ENCODE measurements at regions of chr13 and their contacts with region 1.

Region 1: GRCh38 chr13:100721885-100722512 is 47.4 kb upstream of the TMTC4 start:
- DNase-seq: peak; percentile 0
- H3K4me3 ChIP-seq: no peak overlapping the region
- CTCF ChIP-seq: peak; percentile 68

Region 2: GRCh38 chr13:100734194-100734720 is 12.3 kb after region 1 on chr13:
- CTCF ChIA-PET with region 1: interaction called, 34 read pairs
- POLR2A ChIA-PET with region 1: no interaction called
- DNase-seq: no peak
- H3K4me3 ChIP-seq: no peak overlapping the region
- CTCF ChIP-seq: no peak

Region 3: DNA sequence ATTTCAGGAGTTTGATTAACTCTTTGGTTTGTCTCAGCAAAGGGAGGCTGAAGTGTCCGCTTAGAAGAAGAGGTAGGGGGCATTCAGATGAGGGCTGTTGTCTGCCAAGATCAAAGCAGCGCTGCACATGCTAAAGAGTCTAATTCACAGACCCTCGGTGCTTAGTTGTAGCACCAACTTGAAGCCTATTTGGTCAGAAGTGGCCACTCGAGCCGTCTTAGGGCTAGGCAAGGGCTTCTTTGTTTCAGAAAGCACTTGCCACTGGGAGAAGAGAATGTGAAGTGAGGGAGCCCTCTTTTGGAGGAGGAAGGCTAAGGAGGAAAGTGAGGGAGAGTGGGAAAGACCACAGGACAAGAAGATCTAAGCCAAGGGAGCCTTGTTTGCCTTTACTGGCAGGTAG is 266.0 kb after region 1 on chr13:
- CTCF ChIA-PET with region 1: interaction called, 33 read pairs
- POLR2A ChIA-PET with region 1: no interaction called
- DNase-seq: peak; percentile 5
- H3K4me3 ChIP-seq: no peak overlapping the region
- CTCF ChIP-seq: peak; percentile 40

Region 4: GRCh38 chr13:101035961-101036360 is 314.0 kb after region 1 on chr13:
- CTCF ChIA-PET with region 1: no interaction called
- POLR2A ChIA-PET with region 1: no interaction called
- DNase-seq: no peak
- H3K4me3 ChIP-seq: no peak overlapping the region
- CTCF ChIP-seq: no peak

Region 5: GRCh38 chr13:101098873-101099272 is 376.9 kb after region 1 on chr13:
- CTCF ChIA-PET with region 1: interaction called, 71 read pairs
- POLR2A ChIA-PET with region 1: no interaction called
- DNase-seq: no peak
- H3K4me3 ChIP-seq: no peak overlapping the region
- CTCF ChIP-seq: no peak

Region 6: DNA sequence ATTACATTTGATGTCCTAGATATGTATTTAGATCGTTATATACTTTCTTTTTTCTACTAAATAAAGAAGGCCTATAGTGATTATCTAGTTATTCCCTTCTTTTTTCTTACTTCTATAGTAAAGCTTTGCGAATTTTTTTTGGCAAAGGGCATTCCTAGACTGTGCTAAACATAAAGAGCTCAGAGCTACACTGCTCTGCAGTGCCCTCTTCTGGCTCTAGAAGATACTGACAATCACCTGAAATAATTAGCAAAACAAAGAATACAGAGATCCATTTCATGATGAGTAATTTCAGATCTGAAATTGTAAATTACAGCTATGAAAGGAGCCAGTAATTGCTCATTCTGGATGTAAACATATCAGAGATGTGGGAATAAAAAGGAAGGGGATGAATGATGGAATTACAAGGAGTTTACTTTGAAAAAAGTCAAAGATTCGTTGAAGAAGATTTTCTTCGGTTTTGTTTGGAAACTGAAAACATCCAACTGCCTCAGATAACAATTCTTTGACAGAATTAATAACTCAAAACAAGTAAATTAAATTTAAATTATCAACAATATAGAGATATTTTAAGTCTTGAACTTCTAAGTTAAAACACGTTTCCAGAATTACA is 405.8 kb after region 1 on chr13:
- CTCF ChIA-PET with region 1: interaction called, 29 read pairs
- POLR2A ChIA-PET with region 1: no interaction called
- DNase-seq: no peak
- H3K4me3 ChIP-seq: no peak overlapping the region
- CTCF ChIP-seq: peak; percentile 64